ENCODE measurements at regions of chr2 and their contacts with region 1.

Region 1: GRCh38 chr2:44291281-44292248 is 16.3 kb downstream of the SLC3A1 start:
- DNase-seq: peak; percentile 62 to 84
- ATAC-seq: peak; percentile 93

Region 2: GRCh38 chr2:43887176-43887575 is 404.4 kb before region 1 on chr2:
- intact Hi-C with region 1: no loop called
- DNase-seq: no peak
- ATAC-seq: no peak

Region 3: GRCh38 chr2:44044281-44044720 is 247.3 kb before region 1 on chr2:
- intact Hi-C with region 1: loop called in 1 of 2 experiments (anchors 5 kb)
- DNase-seq: peak; percentile 72 to 89
- ATAC-seq: peak; percentile 100

Region 4: GRCh38 chr2:44087036-44087713 is 204.4 kb before region 1 on chr2:
- intact Hi-C with region 1: loop called in 1 of 2 experiments (anchors 10 kb)
- DNase-seq: peak; percentile 75 to 91
- ATAC-seq: peak; percentile 94

Measured in left colon (tissue), 2 donors.